Transverse colon (tissue), 4 donors: ENCODE measurements at regions of chr6 and their contacts with region 1.

Region 1: GRCh38 chr6:24283043-24283985 is 74.5 kb downstream of the DCDC2 start:
- DNase-seq: peak; percentile 72
- H3K4me3 ChIP-seq: peak overlapping the region in 1 of 4 donors; percentile 31
- H3K27ac ChIP-seq: peak overlapping the region in 2 of 4 donors; percentile 4 to 8
- H3K4me1 ChIP-seq: peaks cover 0 to 15% (median 9%) of the 10 kb centered on the region in 4 donors
- H3K27me3 ChIP-seq: no peaks in the 10 kb centered on the region
- CTCF ChIP-seq: peak; percentile 42 to 68 (median 48)
- EP300 ChIP-seq: no peak
- POLR2A ChIP-seq: no peak

Region 2: GRCh38 chr6:23775127-23775526 is 508.2 kb before region 1 on chr6:
- in situ Hi-C with region 1: no loop called
- intact Hi-C with region 1: no loop called
- DNase-seq: no peak
- H3K4me3 ChIP-seq: no peak overlapping the region
- H3K27ac ChIP-seq: no peak overlapping the region
- H3K4me1 ChIP-seq: no peaks in the 10 kb centered on the region
- H3K27me3 ChIP-seq: no peaks in the 10 kb centered on the region
- CTCF ChIP-seq: no peak
- EP300 ChIP-seq: no peak
- POLR2A ChIP-seq: no peak

Region 3: DNA sequence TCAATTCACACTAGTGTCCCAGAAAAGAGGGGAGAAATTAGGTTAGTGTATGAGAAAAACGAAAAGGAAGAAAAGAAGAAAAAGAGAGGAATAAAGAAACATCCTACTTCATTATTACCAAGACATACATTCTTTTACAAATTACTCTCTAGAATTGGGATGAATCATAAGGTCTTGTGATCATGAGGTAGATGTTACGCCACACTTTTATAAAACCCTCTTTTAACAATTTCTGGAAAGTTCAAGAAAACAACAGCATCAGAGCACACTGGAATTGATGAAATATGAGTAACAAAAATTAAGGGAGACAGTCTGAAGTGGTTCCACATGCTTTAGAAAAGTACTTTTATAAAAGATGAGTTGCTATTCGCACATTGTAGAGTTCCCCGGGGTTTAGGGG is 189.9 kb before region 1 on chr6:
- in situ Hi-C with region 1: no loop called
- intact Hi-C with region 1: no loop called
- DNase-seq: no peak
- H3K4me3 ChIP-seq: no peak overlapping the region
- H3K27ac ChIP-seq: no peak overlapping the region
- H3K4me1 ChIP-seq: no peaks in the 10 kb centered on the region
- H3K27me3 ChIP-seq: no peaks in the 10 kb centered on the region
- CTCF ChIP-seq: no peak
- EP300 ChIP-seq: no peak
- POLR2A ChIP-seq: no peak

Region 4: DNA sequence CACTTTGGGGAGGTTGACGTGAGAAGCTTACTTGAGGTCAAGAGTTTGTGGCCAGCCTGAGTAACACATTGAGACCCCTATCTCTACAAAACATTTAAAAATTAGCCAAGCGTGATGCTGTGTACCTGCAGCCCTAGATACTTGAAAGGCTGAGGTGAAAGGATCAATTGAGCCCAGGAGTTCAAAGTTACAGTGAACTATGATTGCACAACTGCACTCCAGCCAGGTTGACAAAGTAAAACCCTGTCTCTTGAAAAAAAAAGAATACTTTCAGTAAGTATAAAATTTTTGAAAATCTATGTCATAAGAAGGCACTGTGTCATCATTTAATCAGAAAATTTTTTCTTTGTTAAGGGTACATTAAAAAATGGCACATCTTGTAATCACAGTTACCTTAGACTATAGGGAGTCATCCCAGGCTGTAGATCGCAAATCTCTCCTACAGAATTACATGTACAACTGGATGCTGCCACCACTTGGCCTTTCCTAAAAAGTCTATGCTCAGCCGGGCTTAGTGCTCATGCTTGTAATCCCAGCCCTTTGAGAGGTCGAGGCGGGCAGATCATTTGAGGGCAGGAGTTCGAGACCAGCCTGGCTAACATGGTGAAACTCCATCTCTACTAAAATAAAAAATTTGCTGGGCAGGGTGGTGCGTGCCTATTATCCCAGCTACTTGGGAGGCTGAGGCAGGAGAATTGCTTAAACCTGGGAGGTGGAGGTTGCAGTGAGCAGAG is 102.4 kb after region 1 on chr6:
- in situ Hi-C with region 1: loop called in 3 of 4 experiments (anchors 5 to 10 kb)
- intact Hi-C with region 1: no loop called
- DNase-seq: no peak
- H3K4me3 ChIP-seq: no peak overlapping the region
- H3K27ac ChIP-seq: no peak overlapping the region
- H3K4me1 ChIP-seq: no peaks in the 10 kb centered on the region
- H3K27me3 ChIP-seq: no peaks in the 10 kb centered on the region
- CTCF ChIP-seq: no peak
- EP300 ChIP-seq: no peak
- POLR2A ChIP-seq: no peak

Region 5: DNA sequence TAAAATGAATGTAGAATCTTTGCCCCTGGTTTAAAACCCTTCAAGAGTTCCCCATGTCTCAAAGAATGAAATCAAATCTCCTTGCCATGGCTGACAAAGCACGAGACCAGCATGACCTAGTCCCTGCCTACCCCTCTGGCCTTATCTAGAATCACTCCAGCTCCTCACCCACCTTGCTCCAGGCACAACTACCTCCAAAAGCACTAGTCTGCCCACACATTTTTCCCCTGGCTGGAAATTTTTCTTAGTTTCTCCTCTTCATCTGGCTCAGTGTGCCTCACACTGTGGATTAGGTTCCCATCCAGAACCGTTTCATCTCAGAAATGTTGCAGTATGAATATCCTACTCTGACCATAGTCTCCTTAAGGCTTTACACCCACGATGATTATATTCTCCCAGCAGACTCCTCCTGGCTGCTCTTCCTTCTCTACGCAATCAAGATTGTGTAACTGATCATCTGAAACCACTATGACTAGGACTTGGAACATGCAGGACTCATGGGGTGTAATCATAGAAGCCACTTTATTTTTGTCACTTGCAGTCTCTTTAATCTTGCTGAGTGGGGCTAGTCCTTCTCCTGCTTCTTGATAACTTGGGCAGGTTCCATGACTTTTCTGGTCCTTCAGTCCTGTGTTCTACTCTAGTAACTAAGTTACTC is 111.6 kb after region 1 on chr6:
- in situ Hi-C with region 1: loop called in 2 of 4 experiments (anchors 10 kb)
- intact Hi-C with region 1: no loop called
- DNase-seq: no peak
- H3K4me3 ChIP-seq: no peak overlapping the region
- H3K27ac ChIP-seq: no peak overlapping the region
- H3K4me1 ChIP-seq: no peaks in the 10 kb centered on the region
- H3K27me3 ChIP-seq: peaks cover 11% of the 10 kb centered on the region
- CTCF ChIP-seq: no peak
- EP300 ChIP-seq: no peak
- POLR2A ChIP-seq: no peak